CD4-positive, alpha-beta T cell (primary cell): ENCODE measurements at regions of chr3 and their contacts with region 1.

Region 1: DNA sequence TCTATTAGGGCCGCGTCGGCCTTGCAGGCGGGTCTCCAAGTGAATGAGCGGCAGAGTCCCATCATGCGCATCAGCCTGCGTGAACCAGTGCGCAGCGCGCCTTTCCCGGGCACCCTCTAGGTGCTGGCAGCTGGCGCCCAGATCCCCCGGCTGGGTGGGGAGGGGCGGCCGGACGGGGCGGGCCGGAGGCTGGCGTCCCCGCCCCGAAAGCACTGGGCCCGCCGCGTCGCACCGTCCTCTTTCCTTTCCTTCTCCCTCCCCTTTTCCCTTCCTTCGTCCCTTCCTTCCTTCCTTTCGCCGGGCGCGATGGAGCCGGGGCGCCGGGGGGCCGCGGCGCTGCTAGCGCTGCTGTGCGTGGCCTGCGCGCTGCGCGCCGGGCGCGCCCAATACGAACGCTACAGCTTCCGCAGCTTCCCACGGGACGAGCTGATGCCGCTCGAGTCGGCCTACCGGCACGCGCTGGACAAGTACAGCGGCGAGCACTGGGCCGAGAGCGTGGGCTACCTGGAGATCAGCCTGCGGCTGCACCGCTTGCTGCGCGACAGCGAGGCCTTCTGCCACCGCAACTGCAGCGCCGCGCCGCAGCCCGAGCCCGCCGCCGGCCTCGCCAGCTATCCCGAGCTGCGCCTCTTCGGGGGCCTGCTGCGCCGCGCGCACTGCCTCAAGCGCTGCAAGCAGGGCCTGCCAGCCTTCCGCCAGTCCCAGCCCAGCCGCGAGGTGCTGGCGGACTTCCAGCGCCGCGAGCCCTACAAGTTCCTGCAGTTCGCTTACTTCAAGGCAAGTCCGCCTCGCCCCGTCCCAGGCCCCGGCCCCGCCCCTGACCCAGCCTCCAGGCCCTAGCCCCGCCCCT is at the start of gene CRTAP:
- DNase-seq: peak; percentile 74 to 94 (median 86)
- ATAC-seq: peak; percentile 78
- H3K4me3 ChIP-seq: peak within 1 kb of the TSS; percentile 76
- H3K4me3 Mint-ChIP-seq: peak within 1 kb of the TSS; percentile 95
- H3K27ac ChIP-seq: peak within 1 kb of the TSS; percentile 55 to 59
- H3K27ac Mint-ChIP-seq: peak within 1 kb of the TSS; percentile 87
- H3K4me1 ChIP-seq: peaks cover 20% of the 10 kb centered on the region
- H3K4me1 Mint-ChIP-seq: peaks cover 56% of the 10 kb centered on the region
- H3K27me3 ChIP-seq: no peaks in the 10 kb centered on the region
- H3K27me3 Mint-ChIP-seq: no peaks in the 10 kb centered on the region
- CTCF ChIP-seq: no peak
- total RNA-seq, gene CRTAP: 38.2 to 40.3 TPM

Region 2: GRCh38 chr3:32709346-32709745 is 404.7 kb before region 1 on chr3:
- CTCF ChIA-PET with region 1: no interaction called
- POLR2A ChIA-PET with region 1: no interaction called
- intact Hi-C with region 1: no loop called
- DNase-seq: no peak
- ATAC-seq: no peak
- H3K4me3 ChIP-seq: no peak overlapping the region
- H3K4me3 Mint-ChIP-seq: no peak overlapping the region
- H3K27ac ChIP-seq: no peak overlapping the region
- H3K27ac Mint-ChIP-seq: no peak overlapping the region
- H3K4me1 ChIP-seq: no peaks in the 10 kb centered on the region
- H3K4me1 Mint-ChIP-seq: peaks cover 17% of the 10 kb centered on the region
- H3K27me3 ChIP-seq: no peaks in the 10 kb centered on the region
- H3K27me3 Mint-ChIP-seq: no peaks in the 10 kb centered on the region
- CTCF ChIP-seq: no peak

Region 3: DNA sequence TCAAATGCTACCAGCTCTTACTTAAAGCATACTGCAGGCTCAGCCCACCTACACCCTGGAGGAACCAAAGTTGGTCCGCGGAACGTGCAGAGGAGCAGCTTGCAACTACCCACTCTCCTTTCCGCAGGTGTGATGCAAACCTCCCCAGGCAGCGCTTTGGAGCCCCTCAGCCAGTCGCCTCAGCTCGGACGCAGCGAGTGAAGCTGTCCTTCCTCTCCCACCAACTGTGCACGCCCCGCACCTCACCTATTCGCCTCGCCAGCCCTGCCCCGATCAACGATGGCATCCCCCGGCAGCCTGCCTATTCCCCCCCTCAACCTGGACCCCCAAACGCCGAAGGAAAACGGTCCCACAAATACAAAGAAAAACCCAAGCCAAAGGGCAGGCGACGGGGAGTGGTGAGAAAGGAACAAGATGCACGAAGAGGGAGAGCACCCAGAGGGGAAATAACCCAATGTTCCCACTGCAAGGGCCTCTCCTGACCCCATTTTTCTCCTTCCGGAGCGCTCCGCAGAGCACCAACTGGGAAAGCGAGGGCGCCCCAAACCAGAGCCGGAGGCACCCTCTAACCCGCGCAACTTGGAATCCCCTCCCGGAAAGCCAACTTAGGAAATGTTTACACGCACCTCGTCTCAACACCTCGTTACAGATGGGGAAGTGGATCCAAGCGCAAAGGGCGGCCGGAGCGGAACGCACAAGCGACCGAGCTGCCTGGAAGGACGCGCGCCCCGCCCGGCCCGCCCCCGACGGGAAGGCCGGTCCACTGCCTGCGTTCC is 17.7 kb before region 1 on chr3:
- CTCF ChIA-PET with region 1: interaction called, 5 read pairs
- POLR2A ChIA-PET with region 1: interaction called, 16 read pairs
- intact Hi-C with region 1: loop called in 1 of 2 experiments (anchors 2 kb)
- DNase-seq: peak; percentile 29 to 71 (median 36)
- ATAC-seq: peak; percentile 53
- H3K4me3 ChIP-seq: peak overlapping the region; percentile 79
- H3K4me3 Mint-ChIP-seq: peak overlapping the region; percentile 97
- H3K27ac ChIP-seq: peak overlapping the region; percentile 15 to 35
- H3K27ac Mint-ChIP-seq: peak overlapping the region; percentile 83
- H3K4me1 ChIP-seq: peaks cover 46% of the 10 kb centered on the region
- H3K4me1 Mint-ChIP-seq: peaks cover 48% of the 10 kb centered on the region
- H3K27me3 ChIP-seq: no peaks in the 10 kb centered on the region
- H3K27me3 Mint-ChIP-seq: no peaks in the 10 kb centered on the region
- CTCF ChIP-seq: no peak

Region 4: GRCh38 chr3:33240261-33240660 is 126.3 kb after region 1 on chr3:
- CTCF ChIA-PET with region 1: no interaction called
- POLR2A ChIA-PET with region 1: no interaction called
- intact Hi-C with region 1: no loop called
- DNase-seq: no peak
- ATAC-seq: no peak
- H3K4me3 ChIP-seq: no peak overlapping the region
- H3K4me3 Mint-ChIP-seq: no peak overlapping the region
- H3K27ac ChIP-seq: no peak overlapping the region
- H3K27ac Mint-ChIP-seq: no peak overlapping the region
- H3K4me1 ChIP-seq: no peaks in the 10 kb centered on the region
- H3K4me1 Mint-ChIP-seq: no peaks in the 10 kb centered on the region
- H3K27me3 ChIP-seq: peaks cover 3 to 21% of the 10 kb centered on the region in 2 experiments
- H3K27me3 Mint-ChIP-seq: peaks cover 36% of the 10 kb centered on the region
- CTCF ChIP-seq: no peak

Region 5: GRCh38 chr3:34783876-34784275 is 1669.9 kb after region 1 on chr3:
- CTCF ChIA-PET with region 1: no interaction called
- POLR2A ChIA-PET with region 1: no interaction called
- intact Hi-C with region 1: no loop called
- DNase-seq: no peak
- ATAC-seq: no peak
- H3K4me3 ChIP-seq: no peak overlapping the region
- H3K4me3 Mint-ChIP-seq: no peak overlapping the region
- H3K27ac ChIP-seq: no peak overlapping the region
- H3K27ac Mint-ChIP-seq: no peak overlapping the region
- H3K4me1 ChIP-seq: no peaks in the 10 kb centered on the region
- H3K4me1 Mint-ChIP-seq: no peaks in the 10 kb centered on the region
- H3K27me3 ChIP-seq: no peaks in the 10 kb centered on the region
- H3K27me3 Mint-ChIP-seq: no peaks in the 10 kb centered on the region
- CTCF ChIP-seq: no peak